ENCODE measurements at regions of chr13 and their contacts with region 1.

Region 1: GRCh38 chr13:26985285-26985878 is 186.2 kb downstream of the USP12 start:
- DNase-seq: peak; percentile 66 to 72 (median 70)
- H3K4me3 ChIP-seq: no peak overlapping the region
- H3K4me3 Mint-ChIP-seq: no peak overlapping the region
- H3K27ac ChIP-seq: no peak overlapping the region
- H3K27ac Mint-ChIP-seq: no peak overlapping the region
- H3K4me1 ChIP-seq: no peaks in the 10 kb centered on the region
- H3K4me1 Mint-ChIP-seq: peaks cover 0 to 2% (median 0%) of the 10 kb centered on the region in 4 donors
- H3K27me3 ChIP-seq: no peaks in the 10 kb centered on the region
- H3K27me3 Mint-ChIP-seq: peaks cover 9 to 13% of the 10 kb centered on the region in 2 donors

Region 2: DNA sequence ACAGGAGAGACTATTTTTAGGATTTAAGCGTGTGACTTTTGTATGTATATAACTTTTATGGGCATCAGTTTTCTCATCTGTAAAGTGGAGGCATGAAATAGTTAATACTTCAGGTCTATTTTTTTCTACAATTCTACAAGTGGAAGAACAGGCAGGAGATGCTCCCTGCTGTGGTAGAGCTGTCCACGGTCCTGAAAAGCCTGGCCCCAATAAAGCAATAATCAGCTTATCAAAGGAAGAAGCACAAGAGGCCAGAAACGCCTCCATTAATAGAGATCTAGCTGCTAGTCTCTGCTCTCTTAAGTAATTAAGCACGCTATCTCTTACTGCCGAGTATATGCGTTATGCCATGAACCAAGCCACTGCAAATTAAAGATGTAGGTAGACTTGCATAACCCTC is 455.9 kb before region 1 on chr13:
- CTCF ChIA-PET with region 1: no interaction called
- POLR2A ChIA-PET with region 1: no interaction called
- intact Hi-C with region 1: no loop called
- DNase-seq: peak in 1 of 5 donors; percentile 2
- H3K4me3 ChIP-seq: no peak overlapping the region
- H3K4me3 Mint-ChIP-seq: no peak overlapping the region
- H3K27ac ChIP-seq: no peak overlapping the region
- H3K27ac Mint-ChIP-seq: no peak overlapping the region
- H3K4me1 ChIP-seq: no peaks in the 10 kb centered on the region
- H3K4me1 Mint-ChIP-seq: no peaks in the 10 kb centered on the region
- H3K27me3 ChIP-seq: no peaks in the 10 kb centered on the region
- H3K27me3 Mint-ChIP-seq: peaks cover 6 to 7% of the 10 kb centered on the region in 2 donors

Region 3: DNA sequence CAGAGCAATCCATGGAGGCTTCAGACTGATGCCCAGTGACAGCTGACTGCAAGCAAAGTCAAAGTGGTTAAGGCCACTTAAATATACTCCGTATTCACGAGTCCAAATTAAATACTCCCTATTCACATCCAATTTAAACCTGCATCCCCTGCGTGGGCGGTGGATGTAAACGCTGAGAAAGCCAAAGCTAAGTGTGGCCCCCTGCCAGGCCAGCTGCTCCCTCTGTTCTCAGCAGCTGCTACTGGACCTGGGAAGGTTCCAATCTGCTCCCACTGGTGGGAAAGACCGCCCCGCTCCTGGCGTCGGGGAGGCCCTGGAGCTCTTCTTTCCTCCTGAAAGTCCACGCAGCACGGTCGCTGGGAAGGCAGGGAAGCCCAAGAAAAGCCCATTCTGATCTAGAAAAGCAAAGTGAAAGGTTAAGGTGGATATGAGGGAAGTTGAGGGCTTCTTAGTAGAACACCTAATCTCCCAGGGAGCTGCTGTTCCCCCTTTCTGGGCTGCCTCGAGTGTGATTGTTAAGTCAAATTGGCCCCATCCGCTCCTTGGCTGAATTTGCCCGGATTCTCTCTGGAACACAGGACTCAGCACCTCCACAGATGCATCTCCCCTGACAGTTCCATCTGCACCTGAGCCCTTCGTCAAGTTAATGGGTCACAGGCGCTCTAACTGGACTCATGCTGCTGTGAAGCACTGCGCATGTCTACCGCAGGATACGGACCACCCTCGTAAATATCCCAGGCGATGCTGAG is 19.3 kb before region 1 on chr13:
- CTCF ChIA-PET with region 1: interaction called, 11 read pairs
- POLR2A ChIA-PET with region 1: no interaction called
- intact Hi-C with region 1: no loop called
- DNase-seq: no peak
- H3K4me3 ChIP-seq: no peak overlapping the region
- H3K4me3 Mint-ChIP-seq: no peak overlapping the region
- H3K27ac ChIP-seq: no peak overlapping the region
- H3K27ac Mint-ChIP-seq: no peak overlapping the region
- H3K4me1 ChIP-seq: no peaks in the 10 kb centered on the region
- H3K4me1 Mint-ChIP-seq: no peaks in the 10 kb centered on the region
- H3K27me3 ChIP-seq: no peaks in the 10 kb centered on the region
- H3K27me3 Mint-ChIP-seq: peaks cover 0 to 6% of the 10 kb centered on the region in 2 donors

Region 4: GRCh38 chr13:27001705-27002104 is 16.3 kb after region 1 on chr13:
- CTCF ChIA-PET with region 1: interaction called, 17 read pairs
- POLR2A ChIA-PET with region 1: no interaction called
- intact Hi-C with region 1: no loop called
- DNase-seq: no peak
- H3K4me3 ChIP-seq: no peak overlapping the region
- H3K4me3 Mint-ChIP-seq: no peak overlapping the region
- H3K27ac ChIP-seq: no peak overlapping the region
- H3K27ac Mint-ChIP-seq: no peak overlapping the region
- H3K4me1 ChIP-seq: no peaks in the 10 kb centered on the region
- H3K4me1 Mint-ChIP-seq: peaks cover 0 to 7% (median 1%) of the 10 kb centered on the region in 4 donors
- H3K27me3 ChIP-seq: no peaks in the 10 kb centered on the region
- H3K27me3 Mint-ChIP-seq: peaks cover 19 to 47% of the 10 kb centered on the region in 2 donors

Region 5: DNA sequence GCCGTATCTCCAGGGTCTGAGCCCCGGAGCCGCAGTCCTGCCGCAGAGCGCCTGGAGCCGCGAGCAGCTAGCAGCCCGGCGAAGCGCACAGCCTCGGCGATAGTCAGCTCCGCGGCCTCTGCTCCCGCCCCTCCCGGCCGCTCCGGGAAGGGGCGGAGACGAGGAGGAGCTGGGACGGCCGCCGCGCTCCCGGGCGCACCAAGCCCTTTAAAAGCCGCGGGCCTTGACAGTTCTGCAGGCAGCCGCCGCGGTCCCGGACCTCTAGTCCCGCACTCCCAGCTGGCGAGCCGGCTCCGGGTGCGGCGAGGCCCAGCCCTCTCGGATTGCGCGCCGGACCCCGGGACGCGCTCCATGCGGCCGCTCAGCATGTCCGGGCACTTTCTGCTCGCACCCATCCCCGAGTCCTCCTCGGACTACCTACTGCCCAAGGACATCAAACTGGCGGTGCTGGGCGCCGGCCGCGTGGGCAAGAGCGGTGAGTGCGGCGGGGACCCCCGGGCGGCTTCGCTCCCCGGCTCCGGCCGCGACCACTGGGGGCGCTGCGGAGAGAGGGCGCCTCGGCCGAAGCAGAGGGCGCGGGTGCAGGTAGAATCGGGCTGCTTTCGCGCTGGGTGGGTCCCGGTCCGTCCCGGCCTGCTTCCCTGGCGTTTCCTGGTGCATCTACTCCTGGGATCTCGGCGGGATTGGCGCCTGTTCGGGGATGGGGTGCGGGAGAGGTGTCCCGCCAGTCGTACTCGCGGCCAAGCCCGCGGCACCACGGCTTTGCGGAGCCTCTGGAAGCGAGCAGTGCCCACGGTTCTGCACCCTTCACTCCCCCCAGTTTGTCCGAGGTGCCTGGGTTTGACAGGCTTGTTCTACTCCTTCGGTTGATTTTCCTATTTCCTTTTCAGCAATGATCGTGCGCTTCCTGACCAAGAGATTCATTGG is 285.5 kb after region 1 on chr13 and contains the start of gene RASL11A:
- CTCF ChIA-PET with region 1: interaction called, 3 read pairs
- POLR2A ChIA-PET with region 1: no interaction called
- intact Hi-C with region 1: loop called (anchors 5 kb)
- DNase-seq: peak; percentile 62 to 76 (median 69)
- H3K4me3 ChIP-seq: peak within 1 kb of the TSS; percentile 58 to 73
- H3K4me3 Mint-ChIP-seq: peak within 1 kb of the TSS; percentile 87 to 93 (median 90)
- H3K27ac ChIP-seq: peak within 1 kb of the TSS; percentile 52
- H3K27ac Mint-ChIP-seq: peak within 1 kb of the TSS in 6 of 7 donors; percentile 25 to 84 (median 70)
- H3K4me1 ChIP-seq: peaks cover 8% of the 10 kb centered on the region
- H3K4me1 Mint-ChIP-seq: peaks cover 7 to 13% (median 11%) of the 10 kb centered on the region in 4 donors
- H3K27me3 ChIP-seq: peaks cover 6% of the 10 kb centered on the region
- H3K27me3 Mint-ChIP-seq: peaks cover 10 to 18% of the 10 kb centered on the region in 2 donors
- total RNA-seq, gene RASL11A: 0.78 to 0.96 TPM

Region 6: GRCh38 chr13:27362064-27362883 is 376.9 kb after region 1 on chr13:
- CTCF ChIA-PET with region 1: interaction called, 354 read pairs
- POLR2A ChIA-PET with region 1: interaction called, 4 read pairs
- intact Hi-C with region 1: loop called (anchors 1 kb)
- DNase-seq: peak; percentile 62 to 72 (median 66)
- H3K4me3 ChIP-seq: peak overlapping the region in 1 of 2 donors; percentile 17
- H3K4me3 Mint-ChIP-seq: peak overlapping the region in 6 of 8 donors; percentile 31 to 81 (median 46)
- H3K27ac ChIP-seq: no peak overlapping the region
- H3K27ac Mint-ChIP-seq: no peak overlapping the region
- H3K4me1 ChIP-seq: peaks cover 9% of the 10 kb centered on the region
- H3K4me1 Mint-ChIP-seq: peaks cover 0 to 7% (median 2%) of the 10 kb centered on the region in 4 donors
- H3K27me3 ChIP-seq: peaks cover 4% of the 10 kb centered on the region
- H3K27me3 Mint-ChIP-seq: peaks cover 5 to 22% of the 10 kb centered on the region in 2 donors

Region 7: GRCh38 chr13:27977476-27978300 is 992.3 kb after region 1 on chr13:
- CTCF ChIA-PET with region 1: interaction called, 25 read pairs
- POLR2A ChIA-PET with region 1: no interaction called
- intact Hi-C with region 1: no loop called
- DNase-seq: no peak
- H3K4me3 ChIP-seq: no peak overlapping the region
- H3K4me3 Mint-ChIP-seq: peak overlapping the region in 2 of 8 donors; percentile 54 to 71
- H3K27ac ChIP-seq: no peak overlapping the region
- H3K27ac Mint-ChIP-seq: no peak overlapping the region
- H3K4me1 ChIP-seq: peaks cover 11% of the 10 kb centered on the region
- H3K4me1 Mint-ChIP-seq: peaks cover 9 to 42% (median 21%) of the 10 kb centered on the region in 4 donors
- H3K27me3 ChIP-seq: peaks cover 19% of the 10 kb centered on the region
- H3K27me3 Mint-ChIP-seq: peaks cover 68 to 74% of the 10 kb centered on the region in 2 donors